Naive thymus-derived CD4-positive, alpha-beta T cell (primary cell): ENCODE measurements at regions of chr17 and their contacts with region 1.

Region 1: GRCh38 chr17:14396547-14396946 is 95.7 kb downstream of the HS3ST3B1 start:
- DNase-seq: peak in 2 of 9 donors; percentile 12 to 18
- ATAC-seq: no peak
- H3K4me3 ChIP-seq: no peak overlapping the region
- H3K4me3 Mint-ChIP-seq: no peak overlapping the region
- H3K27ac ChIP-seq: no peak overlapping the region
- H3K27ac Mint-ChIP-seq: no peak overlapping the region
- H3K4me1 ChIP-seq: no peaks in the 10 kb centered on the region
- H3K4me1 Mint-ChIP-seq: no peaks in the 10 kb centered on the region
- H3K27me3 ChIP-seq: no peaks in the 10 kb centered on the region
- H3K27me3 Mint-ChIP-seq: no peaks in the 10 kb centered on the region

Region 2: DNA sequence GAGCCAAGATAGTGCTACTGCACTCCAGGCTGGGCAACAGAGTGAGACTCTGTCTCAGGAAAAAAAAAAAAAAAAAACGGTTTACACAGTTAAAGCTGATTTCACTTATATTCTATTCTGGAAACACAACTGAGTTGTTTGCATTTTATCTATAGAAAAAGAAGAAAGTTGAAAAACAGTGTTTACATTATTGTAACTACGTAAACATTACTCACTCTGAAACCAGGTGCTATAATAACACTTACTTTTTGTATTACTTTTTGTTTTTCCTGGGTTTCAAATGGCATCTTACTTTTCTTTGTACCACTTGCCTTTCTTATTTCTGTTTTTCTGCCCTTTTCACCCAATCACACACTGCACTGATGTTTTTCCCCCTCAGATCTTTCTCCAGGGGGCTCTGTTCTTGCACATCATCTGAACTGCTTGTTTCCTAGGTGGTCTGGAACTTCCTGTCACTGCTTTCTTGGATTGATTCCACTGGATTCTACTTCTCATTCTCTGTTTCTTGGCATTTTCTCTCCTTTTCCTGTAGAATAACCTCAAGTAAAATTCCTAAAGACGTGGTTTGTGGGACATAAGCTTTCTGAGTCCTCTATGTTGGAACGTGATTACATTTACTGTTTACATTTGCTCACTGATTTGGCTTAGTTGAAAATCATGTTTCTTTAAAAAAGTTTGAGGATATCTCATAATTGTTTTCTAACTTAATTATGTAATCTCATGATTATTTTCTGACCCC is 46.4 kb after region 1 on chr17:
- CTCF ChIA-PET with region 1: no interaction called
- POLR2A ChIA-PET with region 1: no interaction called
- intact Hi-C with region 1: loop called in 1 of 2 experiments (anchors 5 kb)
- DNase-seq: no peak
- ATAC-seq: no peak
- H3K4me3 ChIP-seq: no peak overlapping the region
- H3K4me3 Mint-ChIP-seq: no peak overlapping the region
- H3K27ac ChIP-seq: no peak overlapping the region
- H3K27ac Mint-ChIP-seq: peak overlapping the region in 2 of 9 donors; percentile 23 to 80
- H3K4me1 ChIP-seq: peaks cover 0 to 4% of the 10 kb centered on the region in 2 donors
- H3K4me1 Mint-ChIP-seq: peaks cover 4 to 18% (median 11%) of the 10 kb centered on the region in 7 donors
- H3K27me3 ChIP-seq: no peaks in the 10 kb centered on the region
- H3K27me3 Mint-ChIP-seq: peaks cover 0 to 4% (median 0%) of the 10 kb centered on the region in 5 donors

Region 3: GRCh38 chr17:14580499-14580898 is 184.0 kb after region 1 on chr17:
- CTCF ChIA-PET with region 1: no interaction called
- POLR2A ChIA-PET with region 1: no interaction called
- intact Hi-C with region 1: no loop called
- DNase-seq: no peak
- ATAC-seq: no peak
- H3K4me3 ChIP-seq: no peak overlapping the region
- H3K4me3 Mint-ChIP-seq: no peak overlapping the region
- H3K27ac ChIP-seq: no peak overlapping the region
- H3K27ac Mint-ChIP-seq: no peak overlapping the region
- H3K4me1 ChIP-seq: no peaks in the 10 kb centered on the region
- H3K4me1 Mint-ChIP-seq: no peaks in the 10 kb centered on the region
- H3K27me3 ChIP-seq: no peaks in the 10 kb centered on the region
- H3K27me3 Mint-ChIP-seq: peaks cover 0 to 4% (median 0%) of the 10 kb centered on the region in 5 donors